ENCODE measurements at regions of chr17 and their contacts with region 1.

Region 1: DNA sequence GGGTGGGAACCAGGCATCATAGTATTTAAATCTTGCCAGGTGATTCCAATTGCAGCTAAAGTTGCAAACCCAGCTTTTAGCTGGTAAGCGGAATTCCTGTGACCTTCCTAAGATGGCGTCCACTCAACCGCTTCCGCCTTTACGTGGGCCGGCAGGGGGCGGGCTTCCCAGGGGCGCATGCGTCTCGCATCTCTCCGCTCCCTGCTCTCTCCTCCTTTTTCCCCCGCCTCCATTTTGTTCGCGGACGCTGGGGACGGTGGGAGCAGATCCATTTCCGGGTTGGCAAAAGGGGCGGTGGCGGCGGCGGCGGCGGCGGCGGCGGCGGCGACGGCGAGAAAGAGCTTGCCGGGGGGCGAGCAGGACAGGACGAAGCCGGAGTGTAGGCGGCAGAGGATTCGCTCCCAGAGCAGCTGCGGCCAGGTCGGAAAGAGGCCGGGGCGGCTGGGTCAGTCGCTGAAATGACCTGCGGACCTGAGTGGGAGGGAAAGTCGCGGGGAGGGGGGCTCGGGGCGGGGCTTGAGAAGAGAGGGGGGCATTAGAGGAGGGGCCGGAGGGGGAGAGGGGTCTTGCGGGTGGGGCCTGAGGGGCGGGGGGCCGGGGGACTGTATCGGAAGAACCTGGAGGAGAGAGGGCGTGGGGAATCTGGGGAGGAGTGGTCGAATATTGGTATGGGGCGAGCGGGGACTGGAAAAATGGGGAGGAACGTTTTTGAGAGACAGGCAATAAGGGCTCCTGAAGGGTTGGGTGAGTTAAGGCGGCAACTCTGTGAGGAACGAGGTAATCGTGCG is at the start of gene WIPF2:
- DNase-seq: peak; percentile 61
- H3K4me3 ChIP-seq: peak within 1 kb of the TSS; percentile 94
- CTCF ChIP-seq: peak; percentile 80

Region 2: DNA sequence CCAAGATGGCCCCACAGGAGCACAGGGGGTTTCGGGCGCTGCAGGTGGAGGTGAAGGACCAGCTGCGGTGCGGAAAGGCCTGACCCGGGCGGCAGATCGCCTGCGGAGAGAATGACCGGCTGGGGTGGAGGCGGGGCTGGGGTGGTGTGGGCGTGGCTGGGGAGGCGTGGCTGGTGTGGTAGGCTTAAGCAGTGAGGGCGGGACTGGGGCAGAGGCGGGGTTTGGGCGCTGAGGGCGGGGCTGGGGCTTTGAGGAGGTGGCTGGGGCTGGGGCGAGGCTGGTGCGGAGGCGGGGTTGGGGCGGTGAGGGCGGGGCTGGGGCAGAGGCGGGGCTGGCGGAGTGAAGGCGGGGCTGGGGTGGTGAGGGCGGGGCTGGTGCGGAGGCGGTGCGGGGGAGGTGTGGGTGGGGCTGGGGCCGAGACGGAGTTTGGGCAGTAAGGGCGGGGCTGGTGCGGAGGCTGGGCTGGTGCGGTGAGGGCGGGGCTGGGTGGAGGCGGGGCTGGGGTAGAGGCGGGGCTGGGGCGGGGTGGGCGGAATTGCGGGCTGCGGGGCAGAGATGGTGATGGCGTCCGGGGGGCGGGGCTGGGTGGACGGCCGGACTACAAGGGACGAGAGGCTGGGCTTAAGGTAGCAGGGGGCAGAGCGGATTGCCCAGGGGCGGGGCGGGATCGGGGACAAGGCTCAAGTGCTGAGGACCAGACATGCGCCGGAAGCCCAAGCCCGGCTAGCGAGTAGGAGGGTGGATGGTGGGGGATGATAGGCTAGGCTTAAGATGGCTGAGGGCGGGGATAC is 266.4 kb before region 1 on chr17:
- CTCF ChIA-PET with region 1: no interaction called
- POLR2A ChIA-PET with region 1: no interaction called
- DNase-seq: peak; percentile 36
- H3K4me3 ChIP-seq: peak overlapping the region; percentile 54
- CTCF ChIP-seq: no peak

Region 3: DNA sequence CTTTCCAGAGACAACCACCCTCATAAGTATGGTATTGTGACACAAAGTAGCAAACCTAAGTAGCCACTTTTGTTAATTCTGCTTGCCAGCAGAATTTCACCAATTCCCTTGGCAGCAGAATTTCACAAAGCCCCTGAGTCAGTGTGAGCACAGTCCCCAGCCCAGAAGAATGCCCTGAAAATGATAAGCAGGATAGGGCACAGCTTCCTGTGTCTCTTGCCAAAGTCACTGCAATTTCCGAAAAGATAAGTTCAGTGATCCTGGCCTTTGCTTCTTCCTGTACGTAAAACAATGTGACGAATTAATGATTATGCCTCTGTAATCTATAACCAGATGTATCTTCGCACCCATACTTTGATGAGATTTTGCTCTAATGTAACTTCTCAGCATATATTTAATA is 16.1 kb before region 1 on chr17:
- CTCF ChIA-PET with region 1: interaction called, 65 read pairs
- POLR2A ChIA-PET with region 1: interaction called, 5 read pairs
- DNase-seq: no peak
- H3K4me3 ChIP-seq: no peak overlapping the region
- CTCF ChIP-seq: no peak

Region 4: GRCh38 chr17:40242774-40243173 is 23.5 kb after region 1 on chr17:
- CTCF ChIA-PET with region 1: interaction called, 36 read pairs
- POLR2A ChIA-PET with region 1: no interaction called
- DNase-seq: no peak
- H3K4me3 ChIP-seq: no peak overlapping the region
- CTCF ChIP-seq: no peak

Region 5: GRCh38 chr17:40259505-40259904 is 40.2 kb after region 1 on chr17:
- CTCF ChIA-PET with region 1: interaction called, 17 read pairs
- POLR2A ChIA-PET with region 1: no interaction called
- DNase-seq: no peak
- H3K4me3 ChIP-seq: no peak overlapping the region
- CTCF ChIP-seq: no peak